Cardiac septum (tissue), 1 donor: ENCODE measurements at regions of chr16 and their contacts with region 1.

Region 1: GRCh38 chr16:84970447-84971127 is 40.7 kb downstream of the ZDHHC7 start:
- DNase-seq: peak; percentile 88

Region 2: DNA sequence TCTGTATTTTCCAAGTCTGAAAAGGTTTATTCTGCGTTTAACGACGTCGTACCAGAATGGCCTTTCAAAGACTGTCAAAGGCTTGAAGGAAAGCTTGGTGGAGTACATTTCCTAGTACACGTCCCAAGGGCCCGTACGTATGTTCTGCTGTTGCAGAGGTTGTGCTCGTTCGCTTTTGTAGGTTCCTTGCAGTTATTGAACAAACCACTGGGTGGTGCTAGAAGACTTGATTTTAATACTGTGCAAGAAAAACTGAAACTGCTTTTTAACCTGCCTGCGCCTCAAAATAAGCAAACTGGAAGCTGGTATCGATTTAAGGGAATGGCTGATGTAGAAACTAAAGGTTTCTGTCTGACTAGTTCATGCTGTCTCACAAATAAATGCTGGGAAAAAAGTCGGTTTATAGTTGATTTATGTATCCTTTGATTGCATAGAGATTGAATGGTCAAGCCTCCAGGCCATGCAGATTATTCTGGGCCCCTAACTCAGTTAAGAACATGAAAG is 216.2 kb before region 1 on chr16:
- intact Hi-C with region 1: loop called (anchors 1 kb)
- DNase-seq: no peak

Region 3: GRCh38 chr16:84925092-84925772 is 45.4 kb before region 1 on chr16:
- intact Hi-C with region 1: loop called (anchors 2 kb)
- DNase-seq: peak; percentile 84